K562 (cell line): ENCODE measurements at regions of chr16 and their contacts with region 1.

Region 1: GRCh38 chr16:24748242-24748641 is 18.8 kb downstream of the TNRC6A start:
- DNase-seq: peak in 2 of 4 experiments; percentile 41 to 58
- ATAC-seq: peak; percentile 71
- H3K4me3 ChIP-seq: no peak overlapping the region
- H3K27ac ChIP-seq: peak overlapping the region; percentile 49; the same call in 1 of the 3 replicates
- H3K4me1 ChIP-seq: peaks cover 7 to 41% of the 10 kb centered on the region in 2 experiments; a peak in 3 of 5 replicates
- H3K27me3 ChIP-seq: no peaks in the 10 kb centered on the region
- CTCF ChIP-seq: no peak
- EP300 ChIP-seq: no peak
- POLR2A ChIP-seq: no peak
- RAD21 ChIP-seq: no peak

Region 2: GRCh38 chr16:24430945-24431760 is 317.1 kb before region 1 on chr16:
- CTCF ChIA-PET with region 1: no interaction called
- POLR2A ChIA-PET with region 1: no interaction called
- in situ Hi-C with region 1: no loop called
- intact Hi-C with region 1: no loop called
- DNase-seq: peak in 1 of 4 experiments; percentile 6
- ATAC-seq: no peak
- H3K4me3 ChIP-seq: no peak overlapping the region
- H3K27ac ChIP-seq: no peak overlapping the region
- H3K4me1 ChIP-seq: no peaks in the 10 kb centered on the region
- H3K27me3 ChIP-seq: peaks cover 18% of the 10 kb centered on the region in 2 experiments
- CTCF ChIP-seq: no peak
- EP300 ChIP-seq: no peak
- POLR2A ChIP-seq: no peak
- RAD21 ChIP-seq: no peak

Region 3: GRCh38 chr16:24700549-24701392 is 47.5 kb before region 1 on chr16:
- CTCF ChIA-PET with region 1: no interaction called
- POLR2A ChIA-PET with region 1: no interaction called
- in situ Hi-C with region 1: no loop called
- intact Hi-C with region 1: no loop called
- DNase-seq: peak in 3 of 4 experiments; percentile 22 to 45 (median 29)
- ATAC-seq: peak; percentile 86
- H3K4me3 ChIP-seq: no peak overlapping the region
- H3K27ac ChIP-seq: no peak overlapping the region
- H3K4me1 ChIP-seq: peaks cover 0 to 6% of the 10 kb centered on the region in 2 experiments; a peak in 2 of 5 replicates
- H3K27me3 ChIP-seq: peaks cover 4 to 6% of the 10 kb centered on the region in 2 experiments
- CTCF ChIP-seq: peak; percentile 11 to 37 (median 18); a peak in 2 of 6 replicates
- EP300 ChIP-seq: no peak
- POLR2A ChIP-seq: no peak
- RAD21 ChIP-seq: peak in 1 of 2 experiments; percentile 6; a peak in 1 of 4 replicates

Region 4: DNA sequence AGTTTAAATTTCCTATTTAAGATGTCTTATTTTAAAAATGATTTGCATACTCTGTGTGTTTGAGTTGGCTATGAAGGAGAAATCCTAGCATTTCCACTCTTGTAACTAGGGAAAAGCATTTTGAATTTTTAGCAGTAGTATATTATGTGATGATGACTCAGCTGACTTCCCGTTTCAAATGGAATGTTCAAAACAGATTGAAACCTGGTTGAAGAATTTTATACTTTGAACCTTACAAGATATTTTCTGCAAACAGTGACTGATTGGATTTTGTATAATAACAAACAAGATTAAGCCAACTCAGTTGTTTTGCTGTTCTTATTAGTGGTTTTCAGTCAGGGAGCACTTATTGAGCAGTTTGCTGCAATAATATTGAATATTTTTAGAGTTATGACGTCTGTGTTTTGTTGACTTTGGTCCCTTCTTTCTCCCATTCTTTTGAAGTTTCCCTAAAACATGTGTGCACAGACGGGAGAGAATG is 10.8 kb before region 1 on chr16:
- CTCF ChIA-PET with region 1: no interaction called
- POLR2A ChIA-PET with region 1: interaction called, 17 read pairs
- in situ Hi-C with region 1: no loop called
- intact Hi-C with region 1: no loop called
- DNase-seq: no peak
- ATAC-seq: peak; percentile 47; the same call in 1 of the 3 replicates
- H3K4me3 ChIP-seq: no peak overlapping the region
- H3K27ac ChIP-seq: peak overlapping the region; percentile 46; the same call in 2 of the 3 replicates
- H3K4me1 ChIP-seq: peaks cover 7 to 29% of the 10 kb centered on the region in 2 experiments; a peak in 3 of 5 replicates
- H3K27me3 ChIP-seq: no peaks in the 10 kb centered on the region
- CTCF ChIP-seq: no peak
- EP300 ChIP-seq: no peak
- POLR2A ChIP-seq: no peak
- RAD21 ChIP-seq: no peak

Region 5: GRCh38 chr16:25177831-25178688 is 429.8 kb after region 1 on chr16:
- CTCF ChIA-PET with region 1: no interaction called
- POLR2A ChIA-PET with region 1: no interaction called
- in situ Hi-C with region 1: no loop called
- intact Hi-C with region 1: no loop called
- DNase-seq: no peak
- ATAC-seq: peak; percentile 23; the same call in 2 of the 3 replicates
- H3K4me3 ChIP-seq: no peak overlapping the region
- H3K27ac ChIP-seq: no peak overlapping the region; the same call in 2 of the 3 replicates
- H3K4me1 ChIP-seq: peaks cover 0 to 6% of the 10 kb centered on the region in 2 experiments; a peak in 1 of 5 replicates
- H3K27me3 ChIP-seq: no peaks in the 10 kb centered on the region
- CTCF ChIP-seq: no peak
- EP300 ChIP-seq: no peak
- POLR2A ChIP-seq: no peak
- RAD21 ChIP-seq: no peak